ENCODE measurements at regions of chr10 and their contacts with region 1.

Region 1: GRCh38 chr10:80498833-80499741 is 38.6 kb upstream of the SH2D4B start:
- DNase-seq: peak; percentile 93
- ATAC-seq: peak; percentile 95

Region 2: DNA sequence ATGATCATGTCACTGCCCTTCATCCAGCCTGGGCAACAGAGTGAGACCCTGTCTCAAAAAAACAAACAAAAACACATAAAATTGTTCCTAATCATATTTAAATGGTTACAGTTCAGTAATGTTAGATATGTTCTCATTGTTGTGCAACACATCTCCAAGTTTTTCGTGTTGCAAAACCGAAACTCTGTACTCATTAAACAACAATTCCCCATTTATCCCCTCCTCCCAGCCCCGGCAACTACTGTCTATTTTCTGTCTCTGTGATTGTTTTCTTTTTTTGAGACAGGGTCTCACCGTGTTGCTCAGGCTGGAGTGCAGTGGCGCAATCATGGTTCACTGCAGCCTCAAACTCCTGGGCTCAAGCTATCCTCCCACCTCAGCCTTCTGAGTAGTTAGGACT is 106.8 kb before region 1 on chr10:
- intact Hi-C with region 1: loop called (anchors 10 kb)
- DNase-seq: no peak
- ATAC-seq: no peak

Region 3: DNA sequence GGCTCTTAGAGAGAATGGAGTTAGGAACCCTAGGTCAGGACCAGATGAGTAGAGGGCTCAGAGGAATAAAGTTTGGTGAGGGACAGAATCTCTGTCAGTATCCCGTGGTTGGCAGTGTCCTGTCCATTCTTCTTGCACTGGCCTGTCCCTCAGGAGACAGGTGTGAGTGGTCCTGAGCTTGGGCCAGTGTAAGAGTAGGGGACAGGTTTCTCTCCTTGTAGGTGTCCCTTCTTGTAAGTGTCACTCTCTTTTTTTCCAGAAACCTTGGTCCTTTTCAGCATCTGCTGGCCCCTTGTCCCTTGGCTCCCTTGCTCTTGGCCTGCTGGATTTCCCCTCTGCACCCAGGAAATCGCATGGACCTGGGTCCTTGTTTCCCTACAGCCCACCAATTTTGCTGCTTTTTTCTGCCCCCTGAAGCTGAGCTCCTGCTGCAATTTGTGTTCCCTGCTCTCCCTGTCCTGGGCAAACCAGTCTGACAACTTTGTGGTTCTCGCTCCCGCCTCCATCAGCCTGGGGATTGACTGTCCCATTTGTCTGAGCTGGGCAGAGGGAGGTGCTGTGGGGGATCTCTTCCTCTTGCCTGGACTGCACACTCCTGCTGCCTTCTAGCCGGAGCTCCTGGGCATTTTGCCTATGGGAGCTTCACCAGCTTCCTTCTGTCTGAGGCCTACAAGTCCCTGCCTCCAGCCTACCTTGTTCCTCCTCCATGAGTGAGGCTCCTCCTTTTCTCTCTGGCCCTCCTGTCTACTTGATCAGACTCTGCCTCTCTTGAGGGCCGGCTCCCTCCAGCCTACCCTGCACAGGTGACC is 38.5 kb before region 1 on chr10:
- intact Hi-C with region 1: loop called (anchors 5 kb)
- DNase-seq: peak; percentile 63
- ATAC-seq: no peak

Measured in sciatic nerve (tissue), 2 donors.